ENCODE measurements at regions of chr4 and their contacts with region 1.

Region 1: DNA sequence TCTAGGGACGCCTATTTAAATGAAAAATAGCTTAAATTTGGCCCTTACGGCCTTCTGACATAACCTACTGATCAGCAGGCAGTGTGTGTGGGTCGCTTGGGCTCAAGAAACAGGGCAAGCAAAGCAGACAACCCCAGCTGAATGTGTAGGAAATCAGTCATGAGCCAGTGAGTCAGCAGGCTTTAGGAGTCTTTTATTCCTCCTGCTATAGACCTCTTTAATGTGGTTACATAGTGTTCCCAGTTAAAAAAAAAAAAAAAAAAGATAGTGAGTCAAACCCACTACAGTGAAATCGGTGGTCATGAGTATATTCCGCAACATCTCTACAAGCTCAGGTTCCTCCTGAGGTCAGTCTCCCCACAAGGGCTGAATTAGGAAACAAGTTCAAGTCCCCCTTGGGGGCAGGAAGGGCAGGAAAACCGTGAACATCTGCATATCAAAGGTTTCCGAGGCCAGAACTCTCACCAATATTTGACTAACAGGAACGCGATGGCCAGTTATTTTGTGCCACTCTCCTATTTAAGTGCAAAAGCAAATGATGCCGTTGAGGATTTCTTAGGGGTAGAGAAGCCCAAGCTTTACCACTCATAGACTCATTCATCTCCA is 32.7 kb downstream of the ACSL1 start:
- DNase-seq: peak; percentile 85 to 86
- ATAC-seq: peak; percentile 83 to 87
- H3K4me3 ChIP-seq: peak overlapping the region; percentile 15 to 33 (median 28)
- H3K27ac ChIP-seq: peak overlapping the region; percentile 97 to 100 (median 98)
- H3K4me1 ChIP-seq: peaks cover 76 to 79% of the 10 kb centered on the region in 2 donors
- H3K27me3 ChIP-seq: no peaks in the 10 kb centered on the region
- CTCF ChIP-seq: no peak
- POLR2A ChIP-seq: peak in 1 of 2 donors; percentile 52

Region 2: GRCh38 chr4:184755278-184755677 is 37.8 kb before region 1 on chr4:
- in situ Hi-C with region 1: no loop called
- intact Hi-C with region 1: loop called (anchors 5 kb)
- DNase-seq: peak; percentile 59 to 77
- ATAC-seq: peak; percentile 34 to 44
- H3K4me3 ChIP-seq: no peak overlapping the region
- H3K27ac ChIP-seq: peak overlapping the region; percentile 69 to 85 (median 78)
- H3K4me1 ChIP-seq: peaks cover 38 to 57% of the 10 kb centered on the region in 2 donors
- H3K27me3 ChIP-seq: no peaks in the 10 kb centered on the region
- CTCF ChIP-seq: no peak
- POLR2A ChIP-seq: no peak

Region 3: DNA sequence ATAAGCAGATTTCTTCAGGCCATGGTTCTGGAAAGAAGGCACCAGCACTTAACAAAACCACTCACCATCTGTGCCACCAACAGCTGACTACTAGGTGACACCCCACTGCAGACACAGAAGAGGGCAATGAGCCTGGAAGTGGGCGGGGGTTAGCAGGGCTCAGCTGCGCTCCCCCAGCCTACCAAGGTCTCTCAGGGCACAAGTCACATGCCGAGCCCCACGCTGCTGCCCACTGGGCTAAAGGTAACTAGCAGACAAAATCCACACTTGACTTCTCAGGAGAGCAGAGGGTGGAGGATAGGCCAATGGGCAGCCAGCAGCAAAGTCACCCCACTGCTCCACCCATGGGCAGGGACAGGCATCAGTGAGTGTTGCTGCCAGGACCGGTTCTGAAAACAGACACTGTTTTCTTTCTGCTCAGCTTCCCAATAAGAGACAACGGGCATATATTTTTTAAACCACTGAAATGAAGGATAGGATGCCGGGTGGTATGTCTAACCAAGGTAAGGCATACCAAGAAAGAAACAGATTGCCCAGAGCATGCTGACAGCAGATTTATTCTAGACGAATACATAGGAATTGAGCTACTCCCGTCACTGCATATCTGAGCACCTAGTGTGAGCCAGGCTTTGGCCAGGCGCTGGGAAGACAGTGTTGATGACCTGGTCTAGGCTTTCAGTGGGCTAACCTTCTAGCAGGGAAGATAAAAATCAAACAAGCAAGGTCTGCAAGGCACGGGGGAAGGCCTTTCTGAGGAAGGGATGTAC is 12.6 kb after region 1 on chr4:
- in situ Hi-C with region 1: no loop called
- intact Hi-C with region 1: loop called (anchors 1 kb)
- DNase-seq: peak; percentile 97 to 99
- ATAC-seq: peak; percentile 72
- H3K4me3 ChIP-seq: peak overlapping the region; percentile 63 to 72 (median 68)
- H3K27ac ChIP-seq: peak overlapping the region; percentile 97 to 100 (median 98)
- H3K4me1 ChIP-seq: peaks cover 48 to 72% of the 10 kb centered on the region in 2 donors
- H3K27me3 ChIP-seq: no peaks in the 10 kb centered on the region
- CTCF ChIP-seq: no peak
- POLR2A ChIP-seq: no peak

Measured in gastrocnemius medialis (tissue), 4 donors.